H1 (cell line): ENCODE measurements at regions of chr16 and their contacts with region 1.

Region 1: GRCh38 chr16:50665128-50665878 is 15.8 kb downstream of the SNX20 start:
- DNase-seq: peak; percentile 41 to 99
- H3K4me3 ChIP-seq: peak overlapping the region; percentile 11 to 58 (median 55); a peak in 7 of 8 replicates
- H3K27ac ChIP-seq: no peak overlapping the region
- H3K4me1 ChIP-seq: peaks cover 0 to 2% (median 0%) of the 10 kb centered on the region in 4 experiments; a peak in 1 of 7 replicates
- H3K27me3 ChIP-seq: 0 out of 7 replicates have a peak, but pooled peaks cover 0 to 3% (median 0%) of the 10 kb centered on the region in 4 experiments
- CTCF ChIP-seq: peak; percentile 73 to 90 (median 75)
- EP300 ChIP-seq: no peak; a peak in 1 of 3 replicates
- POLR2A ChIP-seq: no peak
- RAD21 ChIP-seq: peak; percentile 89 to 93

Region 2: DNA sequence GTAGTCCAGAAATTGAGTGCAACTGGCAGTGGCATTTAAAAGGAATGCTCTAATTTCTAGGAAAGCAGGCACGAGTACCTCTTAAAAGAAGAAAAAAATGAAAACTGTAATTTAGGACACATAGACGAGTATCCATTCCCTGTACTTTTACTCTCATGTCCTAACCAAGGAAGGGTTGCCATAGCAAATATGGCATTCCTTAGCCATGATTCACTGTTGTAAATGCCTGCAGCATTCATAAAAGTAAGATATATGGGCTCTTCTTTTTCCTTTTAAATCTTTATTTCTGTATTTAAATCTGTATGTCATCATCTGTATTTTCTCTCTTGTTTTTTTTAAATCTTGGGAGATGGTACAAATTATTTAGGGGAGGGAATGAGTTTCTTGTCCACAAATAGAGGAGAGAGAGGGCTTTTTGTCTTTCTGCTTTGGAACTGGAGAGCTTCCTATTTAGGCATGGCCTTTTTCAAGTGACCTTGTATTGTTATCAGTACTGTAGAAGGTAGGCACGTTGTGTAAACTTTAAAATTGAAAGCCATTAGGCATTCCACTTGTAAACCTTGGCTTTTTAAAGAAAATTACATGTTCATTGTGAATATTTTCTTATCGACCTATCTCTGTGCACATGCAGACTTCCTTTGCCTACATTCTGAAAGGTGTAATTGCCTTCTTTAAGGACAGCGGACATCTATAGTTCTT is 462.2 kb before region 1 on chr16:
- CTCF ChIA-PET with region 1: no interaction called
- POLR2A ChIA-PET with region 1: no interaction called
- DNase-seq: no peak
- H3K4me3 ChIP-seq: no peak overlapping the region
- H3K27ac ChIP-seq: no peak overlapping the region
- H3K4me1 ChIP-seq: no peaks in the 10 kb centered on the region
- H3K27me3 ChIP-seq: no peaks in the 10 kb centered on the region
- CTCF ChIP-seq: no peak
- EP300 ChIP-seq: no peak
- POLR2A ChIP-seq: no peak
- RAD21 ChIP-seq: no peak

Region 3: DNA sequence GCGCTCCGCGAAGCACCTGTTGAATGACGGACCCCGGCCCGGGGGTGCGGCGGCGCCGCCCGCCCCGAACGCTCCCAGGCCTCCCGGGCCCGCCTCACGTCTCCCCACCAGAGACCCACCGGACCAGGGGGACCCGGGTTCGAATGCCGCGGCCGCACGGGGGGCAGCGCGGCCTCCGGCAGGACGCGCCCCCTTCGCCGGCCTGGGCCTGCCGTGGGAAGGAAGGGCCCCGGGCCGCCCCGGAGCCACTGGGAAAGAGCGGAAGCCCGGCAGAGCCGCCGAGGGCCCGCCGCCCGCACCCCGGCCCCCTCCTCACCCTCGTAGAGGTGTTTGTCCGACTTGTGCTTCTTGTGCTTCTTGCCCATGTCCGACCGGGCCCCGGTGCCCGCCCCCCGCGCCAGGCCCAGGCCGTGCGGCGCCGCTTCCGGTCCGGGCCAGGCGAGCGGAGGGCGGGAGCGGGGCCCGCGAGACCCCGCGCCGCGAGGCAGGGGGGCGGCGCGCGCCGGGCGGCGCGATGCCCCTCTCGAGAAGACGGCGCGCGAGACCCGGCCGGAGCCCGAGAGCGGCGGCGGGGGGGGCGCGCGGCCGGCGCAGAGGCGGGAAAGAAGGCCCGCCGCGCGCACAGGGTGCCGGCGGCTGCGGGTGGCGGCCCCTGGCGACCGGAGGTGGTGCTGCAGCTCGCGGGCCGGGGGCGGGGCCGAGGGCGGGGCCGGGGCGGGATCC is 296.7 kb before region 1 on chr16 and contains the start of gene BRD7:
- CTCF ChIA-PET with region 1: interaction called, 19 read pairs
- POLR2A ChIA-PET with region 1: no interaction called
- DNase-seq: peak in 1 of 2 experiments; percentile 71
- H3K4me3 ChIP-seq: peak within 1 kb of the TSS; percentile 69 to 98 (median 80)
- H3K27ac ChIP-seq: peak within 1 kb of the TSS; percentile 55; the same call in 1 of the 2 replicates
- H3K4me1 ChIP-seq: peaks cover 0 to 6% (median 3%) of the 10 kb centered on the region in 4 experiments; a peak in 4 of 7 replicates
- H3K27me3 ChIP-seq: no peaks in the 10 kb centered on the region
- CTCF ChIP-seq: peak; percentile 38 to 62 (median 59)
- EP300 ChIP-seq: no peak
- POLR2A ChIP-seq: peak in 1 of 2 experiments; percentile 30; a peak in 1 of 3 replicates
- RAD21 ChIP-seq: 0 out of 4 replicates have a peak, but pooled peaks of 1 of the 2 experiments have one; percentile 15
- total RNA-seq, gene BRD7: 119 and 120 TPM in 2 replicates

Region 4: GRCh38 chr16:50539822-50540710 is 125.2 kb before region 1 on chr16:
- CTCF ChIA-PET with region 1: interaction called, 22 read pairs
- POLR2A ChIA-PET with region 1: no interaction called
- DNase-seq: no peak
- H3K4me3 ChIP-seq: no peak overlapping the region
- H3K27ac ChIP-seq: no peak overlapping the region
- H3K4me1 ChIP-seq: peaks cover 0 to 7% (median 3%) of the 10 kb centered on the region in 4 experiments; a peak in 4 of 7 replicates
- H3K27me3 ChIP-seq: peaks cover 0 to 3% (median 1%) of the 10 kb centered on the region in 4 experiments; a peak in 1 of 7 replicates
- CTCF ChIP-seq: peak; percentile 48 to 57 (median 56); a peak in 3 of 4 replicates
- EP300 ChIP-seq: no peak
- POLR2A ChIP-seq: no peak
- RAD21 ChIP-seq: peak; percentile 69 to 71

Region 5: DNA sequence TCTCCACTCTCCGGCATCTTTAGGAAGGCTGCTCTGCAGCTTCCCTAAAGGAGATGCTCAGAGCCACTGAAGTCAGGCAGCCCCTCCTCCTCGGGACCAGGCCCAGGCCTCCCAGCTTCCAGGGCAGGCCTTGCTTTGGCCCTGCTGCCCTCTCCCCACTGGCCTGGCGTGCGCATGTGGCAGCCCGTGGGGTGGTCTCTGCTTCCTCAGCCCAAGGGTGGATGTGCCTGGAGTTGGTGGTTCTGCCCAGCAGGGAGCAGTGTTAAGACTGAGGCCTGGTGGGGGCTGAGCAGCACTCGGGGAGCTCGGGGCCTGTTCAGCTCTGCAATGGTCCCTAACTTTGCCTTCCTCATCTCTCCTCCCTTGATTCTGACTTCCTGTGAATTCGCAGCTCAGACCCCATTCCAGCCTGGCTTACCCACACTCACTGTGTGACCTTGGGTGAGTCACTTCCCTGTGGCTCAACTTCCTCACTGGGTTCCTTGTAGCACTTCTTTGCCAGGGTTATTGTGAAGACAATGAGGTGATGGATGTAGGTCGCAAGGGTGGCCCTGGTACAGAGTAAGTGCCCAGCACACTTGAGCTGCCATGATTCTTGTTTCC is 53.9 kb before region 1 on chr16:
- CTCF ChIA-PET with region 1: interaction called, 100 read pairs
- POLR2A ChIA-PET with region 1: no interaction called
- DNase-seq: no peak
- H3K4me3 ChIP-seq: no peak overlapping the region
- H3K27ac ChIP-seq: no peak overlapping the region
- H3K4me1 ChIP-seq: peaks cover 4 to 18% (median 7%) of the 10 kb centered on the region in 4 experiments; a peak in 6 of 7 replicates
- H3K27me3 ChIP-seq: peaks cover 0 to 1% (median 0%) of the 10 kb centered on the region in 4 experiments; a peak in 1 of 7 replicates
- CTCF ChIP-seq: no peak
- EP300 ChIP-seq: no peak
- POLR2A ChIP-seq: no peak
- RAD21 ChIP-seq: no peak

Region 6: GRCh38 chr16:50635505-50636392 is 29.6 kb before region 1 on chr16:
- CTCF ChIA-PET with region 1: interaction called, 15 read pairs
- POLR2A ChIA-PET with region 1: no interaction called
- DNase-seq: no peak
- H3K4me3 ChIP-seq: no peak overlapping the region
- H3K27ac ChIP-seq: no peak overlapping the region
- H3K4me1 ChIP-seq: no peaks in the 10 kb centered on the region
- H3K27me3 ChIP-seq: peaks cover 0 to 1% (median 0%) of the 10 kb centered on the region in 4 experiments; a peak in 1 of 7 replicates
- CTCF ChIP-seq: no peak
- EP300 ChIP-seq: no peak
- POLR2A ChIP-seq: no peak
- RAD21 ChIP-seq: no peak

Region 7: DNA sequence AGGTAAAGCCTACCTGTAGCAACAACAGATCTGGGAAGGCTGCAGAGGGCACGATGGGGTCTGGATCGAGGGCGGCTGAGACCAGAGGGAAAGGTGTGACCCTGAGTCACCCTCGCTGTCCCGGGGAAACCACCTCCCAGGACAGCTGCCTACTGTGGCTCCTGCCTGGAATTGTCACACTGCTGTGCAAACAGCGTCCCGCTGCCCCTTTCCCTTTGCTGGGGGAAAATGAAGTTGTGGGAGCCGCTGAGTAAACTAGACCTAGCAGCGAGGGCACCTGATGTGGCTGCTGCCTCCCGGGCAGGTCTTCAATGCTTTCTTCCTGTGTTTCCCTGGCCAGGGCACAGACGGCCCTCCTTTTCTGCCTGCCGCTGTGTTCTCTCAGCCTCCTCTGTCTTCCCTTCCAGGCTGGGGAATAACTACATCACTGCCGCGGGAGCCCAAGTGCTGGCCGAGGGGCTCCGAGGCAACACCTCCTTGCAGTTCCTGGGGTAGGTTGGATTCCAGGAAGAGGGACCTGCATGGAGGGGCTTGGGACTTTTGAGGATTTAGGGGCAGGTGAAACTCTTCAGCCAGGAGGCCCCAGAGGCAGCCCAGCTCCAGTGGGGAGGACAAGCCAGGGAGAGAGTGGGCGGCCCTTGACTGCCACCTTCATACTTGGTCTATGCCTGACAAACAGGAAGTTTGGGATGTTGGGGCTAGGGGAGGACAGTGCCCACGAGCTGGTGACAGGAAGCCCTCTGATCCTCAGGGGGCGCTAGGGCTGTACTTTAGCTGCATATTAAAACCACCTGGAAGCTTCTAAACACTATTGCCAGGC is 54.4 kb after region 1 on chr16:
- CTCF ChIA-PET with region 1: interaction called, 15 read pairs
- POLR2A ChIA-PET with region 1: no interaction called
- DNase-seq: peak in 1 of 2 experiments; percentile 53
- H3K4me3 ChIP-seq: no peak overlapping the region
- H3K27ac ChIP-seq: no peak overlapping the region
- H3K4me1 ChIP-seq: peaks cover 0 to 9% (median 3%) of the 10 kb centered on the region in 4 experiments; a peak in 5 of 7 replicates
- H3K27me3 ChIP-seq: no peaks in the 10 kb centered on the region
- CTCF ChIP-seq: peak; percentile 35 to 55 (median 43); a peak in 3 of 4 replicates
- EP300 ChIP-seq: no peak
- POLR2A ChIP-seq: no peak
- RAD21 ChIP-seq: peak; percentile 15 to 29; a peak in 2 of 4 replicates

Region 8: DNA sequence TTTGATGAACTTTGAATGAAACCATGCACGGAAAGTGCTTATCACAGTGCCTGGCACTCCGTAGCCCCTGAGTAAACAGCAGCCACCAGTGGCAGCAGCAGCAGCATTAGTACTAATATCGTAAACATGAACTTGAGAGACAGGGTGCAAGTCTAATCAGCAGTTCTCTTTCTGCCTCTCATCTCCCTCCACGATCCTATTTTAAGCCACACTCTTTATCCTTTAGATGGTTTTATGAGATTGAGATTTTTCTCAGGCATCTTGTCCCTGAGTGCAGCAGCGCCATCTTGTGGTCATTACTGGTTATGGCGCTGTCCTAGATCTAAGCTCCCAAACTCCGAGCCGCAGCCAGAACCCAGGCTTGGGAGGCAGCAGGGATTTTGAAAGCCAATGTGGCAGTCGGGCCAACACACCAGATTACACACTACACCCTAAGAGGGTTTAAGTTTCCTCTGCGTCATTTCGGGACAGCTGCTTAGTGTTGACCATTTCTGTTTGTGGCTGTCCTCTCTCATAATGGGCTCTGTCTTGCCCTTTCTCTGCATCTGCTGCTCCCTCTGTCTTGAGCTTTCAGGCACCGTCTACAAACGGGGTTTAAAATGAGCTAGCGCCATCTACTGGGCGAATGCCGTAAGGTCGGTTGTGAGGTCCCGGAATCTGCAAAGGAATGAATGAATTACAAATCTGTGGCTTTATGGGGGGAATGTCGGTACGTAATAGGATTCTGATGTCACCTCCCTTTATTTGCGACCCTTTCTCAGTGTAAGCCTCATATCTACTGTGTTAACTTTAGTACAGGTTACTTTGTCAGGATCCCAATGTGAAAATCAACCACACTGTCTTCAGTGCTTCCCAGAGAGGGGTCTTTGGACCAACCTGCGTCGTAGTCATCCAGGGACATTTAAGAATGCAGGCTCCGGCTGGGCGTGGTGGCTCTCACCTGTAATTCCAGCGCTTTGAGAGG is 141.1 kb after region 1 on chr16:
- CTCF ChIA-PET with region 1: interaction called, 251 read pairs
- POLR2A ChIA-PET with region 1: no interaction called
- DNase-seq: peak; percentile 62 to 91
- H3K4me3 ChIP-seq: peak overlapping the region; percentile 18 to 53 (median 38); a peak in 7 of 8 replicates
- H3K27ac ChIP-seq: no peak overlapping the region
- H3K4me1 ChIP-seq: peaks cover 0 to 5% (median 0%) of the 10 kb centered on the region in 4 experiments; a peak in 2 of 7 replicates
- H3K27me3 ChIP-seq: no peaks in the 10 kb centered on the region
- CTCF ChIP-seq: peak; percentile 72 to 94 (median 73)
- EP300 ChIP-seq: no peak
- POLR2A ChIP-seq: no peak
- RAD21 ChIP-seq: peak; percentile 80 to 83

Region 9: GRCh38 chr16:50879873-50880695 is 214.8 kb after region 1 on chr16:
- CTCF ChIA-PET with region 1: no interaction called
- POLR2A ChIA-PET with region 1: no interaction called
- DNase-seq: peak in 1 of 2 experiments; percentile 73
- H3K4me3 ChIP-seq: peak overlapping the region; percentile 11 to 54 (median 24); a peak in 4 of 8 replicates
- H3K27ac ChIP-seq: no peak overlapping the region
- H3K4me1 ChIP-seq: peaks cover 0 to 3% (median under 1%) of the 10 kb centered on the region in 4 experiments; a peak in 3 of 7 replicates
- H3K27me3 ChIP-seq: peaks cover 0 to 3% (median 0%) of the 10 kb centered on the region in 4 experiments; a peak in 1 of 7 replicates
- CTCF ChIP-seq: no peak
- EP300 ChIP-seq: no peak
- POLR2A ChIP-seq: no peak
- RAD21 ChIP-seq: no peak

Region 10: GRCh38 chr16:51113236-51114125 is 448.2 kb after region 1 on chr16:
- CTCF ChIA-PET with region 1: no interaction called
- POLR2A ChIA-PET with region 1: no interaction called
- DNase-seq: no peak
- H3K4me3 ChIP-seq: peak overlapping the region in 3 of 4 experiments; percentile 19 to 56 (median 26); a peak in 7 of 8 replicates
- H3K27ac ChIP-seq: no peak overlapping the region
- H3K4me1 ChIP-seq: peaks cover 6 to 17% (median 11%) of the 10 kb centered on the region in 4 experiments
- H3K27me3 ChIP-seq: peaks cover 2 to 10% (median 8%) of the 10 kb centered on the region in 4 experiments
- CTCF ChIP-seq: no peak
- EP300 ChIP-seq: no peak
- POLR2A ChIP-seq: no peak
- RAD21 ChIP-seq: no peak